Calu3 (cell line): ENCODE measurements at regions of chrX and their contacts with region 1.

Region 1: GRCh38 chrX:24838629-24839028 is 144.9 kb downstream of the POLA1 start:
- DNase-seq: peak; percentile 12
- H3K4me3 Mint-ChIP-seq: no peak overlapping the region
- H3K27ac Mint-ChIP-seq: no peak overlapping the region
- H3K4me1 Mint-ChIP-seq: no peaks in the 10 kb centered on the region
- H3K27me3 Mint-ChIP-seq: no peaks in the 10 kb centered on the region
- CTCF ChIP-seq: no peak

Region 2: DNA sequence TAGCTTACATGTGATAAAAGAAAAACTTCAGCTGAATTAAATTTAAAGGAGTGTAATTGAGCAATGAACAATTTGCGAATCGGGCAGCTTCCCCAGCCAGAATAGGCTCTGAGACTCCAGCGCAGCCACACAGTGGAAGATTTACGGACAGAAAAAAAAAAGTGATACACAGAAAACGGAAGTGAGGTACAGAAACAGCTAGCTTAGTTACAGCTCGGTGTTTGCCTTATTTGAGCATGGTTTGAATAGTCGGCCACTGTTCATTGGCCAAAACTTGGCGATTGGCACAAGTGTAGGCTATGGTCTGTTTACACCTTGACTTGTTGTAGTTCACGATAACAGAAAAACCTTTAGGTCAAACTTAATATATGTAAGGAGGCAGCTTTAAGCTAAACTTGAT is 494.9 kb before region 1 on chrX:
- CTCF ChIA-PET with region 1: no interaction called
- intact Hi-C with region 1: no loop called
- DNase-seq: no peak
- H3K4me3 Mint-ChIP-seq: no peak overlapping the region
- H3K27ac Mint-ChIP-seq: no peak overlapping the region
- H3K4me1 Mint-ChIP-seq: no peaks in the 10 kb centered on the region
- H3K27me3 Mint-ChIP-seq: peaks cover 51% of the 10 kb centered on the region
- CTCF ChIP-seq: no peak

Region 3: GRCh38 chrX:24574743-24575142 is 263.9 kb before region 1 on chrX:
- CTCF ChIA-PET with region 1: interaction called, 10 read pairs
- intact Hi-C with region 1: no loop called
- DNase-seq: no peak
- H3K4me3 Mint-ChIP-seq: no peak overlapping the region
- H3K27ac Mint-ChIP-seq: no peak overlapping the region
- H3K4me1 Mint-ChIP-seq: no peaks in the 10 kb centered on the region
- H3K27me3 Mint-ChIP-seq: peaks cover 21% of the 10 kb centered on the region
- CTCF ChIP-seq: no peak

Region 4: DNA sequence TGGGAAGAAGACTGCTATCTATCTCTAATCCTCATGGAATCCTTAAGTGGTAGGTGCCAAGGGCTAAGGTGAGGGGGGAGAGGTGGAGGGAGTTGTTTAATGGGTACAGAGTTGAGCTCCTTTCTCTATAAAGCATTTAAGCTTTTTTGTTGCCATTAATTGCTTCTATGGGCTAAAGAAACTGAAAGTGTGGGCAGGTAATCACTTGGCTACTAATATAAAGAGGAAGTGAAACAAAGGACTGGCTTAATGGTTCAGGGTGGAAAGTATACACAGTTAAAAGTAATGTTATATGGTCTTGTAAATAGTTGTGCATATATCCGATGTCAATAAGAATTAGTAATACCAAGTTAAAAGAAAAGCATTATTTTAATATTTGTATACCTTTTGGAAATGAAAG is 61.0 kb before region 1 on chrX:
- CTCF ChIA-PET with region 1: no interaction called
- intact Hi-C with region 1: no loop called
- DNase-seq: no peak
- H3K4me3 Mint-ChIP-seq: no peak overlapping the region
- H3K27ac Mint-ChIP-seq: no peak overlapping the region
- H3K4me1 Mint-ChIP-seq: no peaks in the 10 kb centered on the region
- H3K27me3 Mint-ChIP-seq: no peaks in the 10 kb centered on the region
- CTCF ChIP-seq: no peak

Region 5: DNA sequence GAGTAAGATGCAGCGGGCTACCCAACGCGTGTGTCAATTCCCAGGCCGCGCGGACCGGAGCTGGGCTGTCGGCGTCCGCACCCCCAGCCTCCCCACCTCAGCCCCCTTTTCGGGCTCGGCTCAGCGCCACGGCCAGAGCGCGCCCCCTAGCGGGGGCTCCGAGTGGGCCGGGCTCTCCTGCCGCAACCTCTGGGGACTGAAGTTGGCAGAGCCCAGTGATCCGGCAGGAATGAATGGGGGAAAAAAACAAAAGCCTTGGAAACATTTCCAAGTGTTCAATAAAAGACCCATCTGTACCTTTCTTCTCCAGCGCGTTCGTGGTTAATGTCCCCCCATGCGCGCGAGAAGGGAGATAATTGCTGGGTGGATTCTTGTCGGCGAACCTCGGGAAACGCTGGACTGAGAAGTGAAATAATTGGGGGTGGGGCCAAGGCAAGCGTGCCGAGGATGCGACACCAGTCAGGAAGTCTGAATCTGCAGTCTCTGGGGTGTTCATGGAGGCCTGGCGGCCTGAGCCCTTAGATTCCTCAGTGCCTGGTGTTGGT is 182.3 kb after region 1 on chrX:
- CTCF ChIA-PET with region 1: interaction called, 6 read pairs
- intact Hi-C with region 1: loop called (anchors 5 kb)
- DNase-seq: peak; percentile 59
- H3K4me3 Mint-ChIP-seq: peak overlapping the region; percentile 40
- H3K27ac Mint-ChIP-seq: no peak overlapping the region
- H3K4me1 Mint-ChIP-seq: peaks cover 6% of the 10 kb centered on the region
- H3K27me3 Mint-ChIP-seq: peaks cover 82% of the 10 kb centered on the region
- CTCF ChIP-seq: peak; percentile 51

Region 6: DNA sequence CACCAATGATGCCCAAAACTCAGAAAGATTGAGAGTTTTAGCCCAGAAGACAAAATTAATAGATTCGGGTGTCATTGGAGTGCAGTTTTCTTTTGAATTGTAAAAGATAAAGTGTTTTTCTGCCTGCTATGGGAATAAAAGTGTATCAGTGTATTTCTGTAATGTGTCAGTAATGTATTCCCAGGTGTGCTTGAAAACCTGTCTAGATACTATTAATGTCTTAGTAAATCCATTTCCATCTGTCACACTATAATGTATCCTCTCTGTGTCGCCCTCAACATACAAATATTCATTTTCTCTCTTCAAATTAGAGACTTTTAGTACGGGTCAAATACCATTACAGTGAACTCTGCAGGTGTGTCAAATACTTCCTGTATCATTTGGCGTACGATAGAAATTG is 220.6 kb after region 1 on chrX:
- CTCF ChIA-PET with region 1: no interaction called
- intact Hi-C with region 1: no loop called
- DNase-seq: no peak
- H3K4me3 Mint-ChIP-seq: no peak overlapping the region
- H3K27ac Mint-ChIP-seq: no peak overlapping the region
- H3K4me1 Mint-ChIP-seq: no peaks in the 10 kb centered on the region
- H3K27me3 Mint-ChIP-seq: no peaks in the 10 kb centered on the region
- CTCF ChIP-seq: no peak

Region 7: DNA sequence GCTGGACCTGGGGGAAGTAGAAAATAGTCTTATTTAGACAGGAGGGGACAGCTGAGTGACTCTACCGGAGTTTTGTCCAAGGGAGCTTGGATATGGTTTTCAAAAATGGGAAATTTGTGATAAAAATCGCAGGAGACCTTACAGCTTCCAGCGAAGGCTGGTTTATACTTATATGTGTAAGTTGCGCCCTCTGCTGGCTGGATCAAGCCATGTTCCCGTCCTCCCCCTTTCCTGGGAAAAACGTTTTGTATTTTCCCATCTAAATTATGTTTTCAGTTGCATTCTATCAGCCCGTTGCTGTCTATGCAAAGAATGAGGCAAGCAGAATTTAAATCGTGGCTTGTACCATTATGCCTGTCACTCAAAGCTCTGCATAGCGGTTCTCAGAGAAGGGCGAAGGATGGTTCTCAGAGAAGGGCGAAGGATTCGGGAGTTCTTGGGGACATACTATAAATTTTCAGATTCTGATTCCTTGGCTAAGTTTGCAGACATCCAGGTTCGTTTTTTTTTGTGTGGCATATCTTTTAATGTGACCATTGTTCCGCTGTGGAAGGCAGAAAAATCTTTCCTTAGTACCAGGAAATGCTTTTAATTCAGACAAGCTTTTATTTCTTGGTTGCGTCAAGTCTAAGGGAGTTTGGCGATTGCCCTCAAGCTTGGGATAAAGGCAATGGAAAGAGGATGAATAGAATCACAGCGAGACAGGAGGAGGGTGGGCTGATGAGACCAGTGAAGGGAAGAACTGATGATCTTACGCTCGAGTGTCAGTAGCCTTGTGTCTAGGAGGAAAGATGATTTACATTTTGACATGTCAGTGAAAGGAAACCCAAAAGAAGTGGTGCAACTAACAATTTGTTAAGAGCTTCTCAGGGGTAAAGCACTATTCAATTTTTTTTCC is 305.7 kb after region 1 on chrX:
- CTCF ChIA-PET with region 1: interaction called, 11 read pairs
- intact Hi-C with region 1: loop called (anchors 1 kb)
- DNase-seq: peak; percentile 57
- H3K4me3 Mint-ChIP-seq: no peak overlapping the region
- H3K27ac Mint-ChIP-seq: no peak overlapping the region
- H3K4me1 Mint-ChIP-seq: no peaks in the 10 kb centered on the region
- H3K27me3 Mint-ChIP-seq: peaks cover 12% of the 10 kb centered on the region
- CTCF ChIP-seq: peak; percentile 58